ENCODE measurements at regions of chr6 and their contacts with region 1.

Region 1: DNA sequence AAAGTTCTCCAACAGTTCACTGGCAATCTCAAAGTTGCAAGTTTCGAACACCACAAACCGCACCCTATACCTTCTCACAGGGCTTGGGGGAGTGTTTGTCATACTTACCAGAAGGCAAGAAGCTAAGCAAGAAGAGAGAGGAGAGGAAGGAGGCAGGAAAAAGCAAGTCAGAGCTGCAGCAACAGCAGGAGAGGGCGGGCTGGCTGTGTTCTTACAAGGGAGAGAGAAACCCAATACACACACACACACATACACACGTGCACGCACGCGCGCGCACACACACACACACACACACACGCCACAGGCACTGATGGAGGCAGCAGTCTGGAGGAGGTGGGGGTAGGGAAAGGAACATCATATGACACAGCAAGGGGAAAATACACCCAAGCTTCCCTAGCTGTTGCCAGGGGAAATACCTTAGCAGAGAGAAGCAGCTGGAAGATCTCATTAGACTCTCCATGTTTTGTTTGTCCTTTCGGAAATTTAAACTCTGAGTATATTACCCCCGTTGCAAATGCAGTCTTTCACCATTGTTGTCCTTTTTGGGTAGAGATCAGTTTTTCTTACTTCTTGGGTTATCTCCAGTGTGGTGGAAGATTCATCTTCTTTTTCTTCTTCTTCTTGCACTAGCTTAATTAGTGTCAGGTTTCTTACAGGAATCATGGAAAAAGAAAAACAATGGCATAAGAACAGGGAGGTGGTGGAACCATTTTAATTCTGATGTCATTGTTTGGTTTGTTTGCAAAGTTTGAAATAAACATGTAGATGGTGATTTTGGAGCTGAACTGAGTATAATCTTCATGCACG is at the start of gene TXLNB:
- DNase-seq: peak; percentile 32 to 94 (median 87)
- ATAC-seq: peak; percentile 92
- H3K4me3 ChIP-seq: peak within 1 kb of the TSS; percentile 42
- H3K4me3 Mint-ChIP-seq: peak within 1 kb of the TSS; percentile 80 to 92 (median 90)
- H3K27ac ChIP-seq: peak within 1 kb of the TSS; percentile 75
- H3K27ac Mint-ChIP-seq: peak within 1 kb of the TSS; percentile 93 to 99 (median 98)
- H3K4me1 ChIP-seq: peaks cover 33 to 39% of the 10 kb centered on the region in 2 donors
- H3K4me1 Mint-ChIP-seq: peaks cover 36 to 87% (median 81%) of the 10 kb centered on the region in 7 donors
- H3K27me3 ChIP-seq: no peaks in the 10 kb centered on the region
- H3K27me3 Mint-ChIP-seq: no peaks in the 10 kb centered on the region
- total RNA-seq, gene TXLNB: 0.29 to 1.1 (median 0.66) TPM

Region 2: GRCh38 chr6:137849181-137849980 is 1442.6 kb before region 1 on chr6:
- CTCF ChIA-PET with region 1: no interaction called
- POLR2A ChIA-PET with region 1: no interaction called
- intact Hi-C with region 1: no loop called
- DNase-seq: no peak
- ATAC-seq: no peak
- H3K4me3 ChIP-seq: no peak overlapping the region
- H3K4me3 Mint-ChIP-seq: no peak overlapping the region
- H3K27ac ChIP-seq: no peak overlapping the region
- H3K27ac Mint-ChIP-seq: no peak overlapping the region
- H3K4me1 ChIP-seq: no peaks in the 10 kb centered on the region
- H3K4me1 Mint-ChIP-seq: peaks cover 0 to 17% (median 0%) of the 10 kb centered on the region in 7 donors
- H3K27me3 ChIP-seq: no peaks in the 10 kb centered on the region
- H3K27me3 Mint-ChIP-seq: no peaks in the 10 kb centered on the region

Region 3: DNA sequence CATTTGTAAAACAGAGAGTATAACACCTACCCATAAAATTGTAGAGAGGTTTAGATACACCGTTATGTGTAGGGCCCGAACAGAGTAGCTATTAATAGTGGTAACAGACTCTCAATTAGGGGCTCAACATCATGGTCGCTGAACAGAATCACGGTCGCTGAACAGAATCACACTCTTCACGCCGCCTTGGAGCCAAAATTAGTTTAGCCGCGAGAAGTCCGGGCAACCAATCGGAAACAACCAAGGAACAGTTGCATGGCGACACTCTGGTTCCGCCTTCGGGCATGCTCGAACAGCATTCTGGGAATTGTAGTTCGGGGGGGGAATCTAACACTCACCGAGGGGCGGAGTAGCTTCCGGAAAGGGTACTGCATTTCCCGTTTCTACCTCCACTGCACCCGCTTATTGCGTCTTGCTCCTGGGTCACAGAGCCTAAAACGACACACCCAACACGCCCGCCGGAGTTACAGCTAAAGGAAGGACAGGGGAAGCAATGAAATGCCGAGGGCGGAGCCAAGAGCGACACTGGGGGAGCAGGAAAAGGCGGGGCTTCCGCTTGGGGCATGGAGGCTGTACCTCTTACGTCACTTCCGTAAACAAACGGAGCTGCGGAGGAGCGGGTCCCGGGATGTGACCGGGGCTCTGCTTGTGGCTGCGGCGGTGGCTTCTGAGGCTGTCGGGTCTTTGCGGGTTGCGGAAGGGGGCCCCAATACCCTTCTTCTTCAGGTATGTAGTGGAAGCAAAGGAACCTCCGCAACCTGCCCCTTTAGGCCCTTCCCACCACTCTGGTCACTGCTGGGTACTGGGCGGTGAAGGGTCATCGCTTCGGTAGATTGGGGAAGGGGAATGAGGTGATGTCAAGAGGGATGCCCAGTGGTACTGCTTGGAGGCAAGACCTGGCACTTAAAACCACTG is 518.6 kb before region 1 on chr6 and contains the start of gene CCDC28A:
- CTCF ChIA-PET with region 1: no interaction called
- POLR2A ChIA-PET with region 1: no interaction called
- intact Hi-C with region 1: loop called (anchors 1 to 2 kb)
- DNase-seq: peak; percentile 86 to 98 (median 97)
- ATAC-seq: peak; percentile 93
- H3K4me3 ChIP-seq: peak within 1 kb of the TSS; percentile 94
- H3K4me3 Mint-ChIP-seq: peak within 1 kb of the TSS; percentile 91 to 100 (median 99)
- H3K27ac ChIP-seq: peak within 1 kb of the TSS; percentile 87
- H3K27ac Mint-ChIP-seq: peak within 1 kb of the TSS; percentile 96 to 100 (median 100)
- H3K4me1 ChIP-seq: peaks cover 6 to 10% of the 10 kb centered on the region in 2 donors
- H3K4me1 Mint-ChIP-seq: peaks cover 4 to 39% (median 36%) of the 10 kb centered on the region in 7 donors
- H3K27me3 ChIP-seq: no peaks in the 10 kb centered on the region
- H3K27me3 Mint-ChIP-seq: no peaks in the 10 kb centered on the region
- total RNA-seq, gene CCDC28A: 19.9 to 34.2 (median 25.6) TPM

Region 4: GRCh38 chr6:139028658-139029469 is 263.2 kb before region 1 on chr6 and contains the start of gene ABRACL:
- CTCF ChIA-PET with region 1: no interaction called
- POLR2A ChIA-PET with region 1: interaction called, 4 read pairs
- intact Hi-C with region 1: loop called (anchors 1 to 2 kb)
- DNase-seq: peak; percentile 44 to 87 (median 81)
- ATAC-seq: peak; percentile 88
- H3K4me3 ChIP-seq: peak within 1 kb of the TSS; percentile 72
- H3K4me3 Mint-ChIP-seq: peak within 1 kb of the TSS in 6 of 10 donors; percentile 88 to 98 (median 94)
- H3K27ac ChIP-seq: peak within 1 kb of the TSS; percentile 88
- H3K27ac Mint-ChIP-seq: peak within 1 kb of the TSS in 8 of 9 donors; percentile 58 to 97 (median 94)
- H3K4me1 ChIP-seq: peaks cover 3 to 18% of the 10 kb centered on the region in 2 donors
- H3K4me1 Mint-ChIP-seq: peaks cover 13 to 35% (median 24%) of the 10 kb centered on the region in 7 donors
- H3K27me3 ChIP-seq: no peaks in the 10 kb centered on the region
- H3K27me3 Mint-ChIP-seq: no peaks in the 10 kb centered on the region
- total RNA-seq, gene ABRACL: 39.5 to 137 (median 107) TPM

Region 5: DNA sequence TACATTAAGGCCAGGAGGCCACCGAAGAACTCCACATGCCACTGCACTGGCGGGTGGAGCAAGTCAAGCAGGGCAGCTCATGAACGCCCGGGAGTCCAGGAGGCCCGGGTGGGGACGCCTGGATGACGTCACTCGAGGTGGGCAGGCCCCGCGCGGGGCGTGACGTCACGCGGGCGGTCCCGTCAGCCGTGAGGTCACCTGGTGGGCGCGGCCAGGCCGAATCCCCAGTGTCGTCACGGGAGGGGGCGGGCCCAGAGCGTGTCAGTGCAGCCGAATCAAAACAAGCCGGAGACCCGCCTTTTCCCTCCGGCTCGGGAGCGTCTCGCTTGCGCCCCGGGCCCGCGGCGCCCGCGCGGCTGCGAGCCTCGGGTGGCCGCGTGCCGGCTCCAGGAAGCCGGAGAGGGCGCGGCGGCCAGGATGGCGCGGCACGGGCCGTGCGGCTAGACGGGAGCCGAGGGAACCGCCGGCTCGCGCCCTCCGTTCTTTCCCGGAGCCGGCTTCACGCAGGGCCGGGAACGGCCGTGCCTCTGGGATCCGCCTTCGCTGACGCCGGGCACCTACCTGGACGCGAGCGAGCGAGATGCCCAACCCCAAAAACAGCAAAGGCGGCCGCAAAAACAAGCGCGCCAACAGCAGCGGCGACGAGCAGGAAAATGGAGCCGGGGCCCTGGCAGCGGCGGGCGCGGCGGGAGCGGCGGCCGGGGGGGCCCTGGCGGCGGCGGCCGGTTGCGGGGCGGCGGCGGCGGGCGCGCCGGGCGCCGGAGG is 157.0 kb before region 1 on chr6 and contains the start of gene HECA:
- CTCF ChIA-PET with region 1: no interaction called
- POLR2A ChIA-PET with region 1: interaction called, 9 read pairs
- intact Hi-C with region 1: loop called (anchors 1 kb)
- DNase-seq: peak; percentile 99 to 100 (median 99)
- ATAC-seq: peak; percentile 91
- H3K4me3 ChIP-seq: peak within 1 kb of the TSS; percentile 93
- H3K4me3 Mint-ChIP-seq: peak within 1 kb of the TSS; percentile 84 to 99 (median 93)
- H3K27ac ChIP-seq: peak within 1 kb of the TSS; percentile 100
- H3K27ac Mint-ChIP-seq: peak within 1 kb of the TSS; percentile 95 to 100 (median 99)
- H3K4me1 ChIP-seq: peaks cover 21 to 43% of the 10 kb centered on the region in 2 donors
- H3K4me1 Mint-ChIP-seq: peaks cover 51 to 77% (median 66%) of the 10 kb centered on the region in 7 donors
- H3K27me3 ChIP-seq: no peaks in the 10 kb centered on the region
- H3K27me3 Mint-ChIP-seq: peaks cover 0 to 2% (median 0%) of the 10 kb centered on the region in 5 donors
- total RNA-seq, gene HECA: 54.1 to 145 (median 130) TPM

Region 6: DNA sequence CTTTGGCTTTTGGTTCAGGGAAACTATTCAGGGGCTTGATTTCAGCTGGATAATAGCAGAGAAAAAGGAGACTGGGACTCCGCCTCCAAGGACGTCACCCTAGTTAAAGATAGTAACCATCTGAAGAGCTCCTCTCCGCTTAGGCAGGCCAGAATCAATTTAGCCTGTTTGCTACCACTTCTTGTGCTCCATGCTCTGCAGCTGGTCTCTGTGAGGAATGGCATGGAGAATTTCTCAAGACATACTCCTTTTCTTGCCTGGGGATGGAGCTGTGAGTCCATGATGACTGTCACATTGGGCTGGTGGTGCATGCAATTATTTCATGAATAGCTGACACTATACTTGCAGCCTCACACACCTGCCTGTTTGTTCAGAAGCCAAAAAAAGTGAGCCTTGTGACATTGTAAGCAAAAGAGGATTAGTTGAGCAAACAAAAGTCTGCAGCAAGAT is 61.6 kb before region 1 on chr6:
- CTCF ChIA-PET with region 1: interaction called, 6 read pairs
- POLR2A ChIA-PET with region 1: interaction called, 3 read pairs
- intact Hi-C with region 1: loop called in 1 of 2 experiments (anchors 5 kb)
- DNase-seq: peak in 4 of 9 donors; percentile 8 to 28 (median 20)
- ATAC-seq: no peak
- H3K4me3 ChIP-seq: no peak overlapping the region
- H3K4me3 Mint-ChIP-seq: no peak overlapping the region
- H3K27ac ChIP-seq: no peak overlapping the region
- H3K27ac Mint-ChIP-seq: peak overlapping the region in 5 of 9 donors; percentile 2 to 44 (median 23)
- H3K4me1 ChIP-seq: no peaks in the 10 kb centered on the region
- H3K4me1 Mint-ChIP-seq: peaks cover 4 to 15% (median 10%) of the 10 kb centered on the region in 7 donors
- H3K27me3 ChIP-seq: no peaks in the 10 kb centered on the region
- H3K27me3 Mint-ChIP-seq: no peaks in the 10 kb centered on the region

Region 7: GRCh38 chr6:139262519-139263300 is 29.3 kb before region 1 on chr6:
- CTCF ChIA-PET with region 1: interaction called, 6 read pairs
- POLR2A ChIA-PET with region 1: interaction called, 10 read pairs
- intact Hi-C with region 1: loop called (anchors 1 kb)
- DNase-seq: peak in 8 of 9 donors; percentile 24 to 56 (median 38)
- ATAC-seq: peak; percentile 85
- H3K4me3 ChIP-seq: peak overlapping the region; percentile 34
- H3K4me3 Mint-ChIP-seq: peak overlapping the region; percentile 45 to 85 (median 77)
- H3K27ac ChIP-seq: peak overlapping the region; percentile 14
- H3K27ac Mint-ChIP-seq: peak overlapping the region; percentile 62 to 89 (median 83)
- H3K4me1 ChIP-seq: peaks cover 7 to 10% of the 10 kb centered on the region in 2 donors
- H3K4me1 Mint-ChIP-seq: peaks cover 17 to 33% (median 25%) of the 10 kb centered on the region in 7 donors
- H3K27me3 ChIP-seq: no peaks in the 10 kb centered on the region
- H3K27me3 Mint-ChIP-seq: no peaks in the 10 kb centered on the region

Region 8: GRCh38 chr6:139323511-139324300 is 31.7 kb after region 1 on chr6:
- CTCF ChIA-PET with region 1: interaction called, 16 read pairs
- POLR2A ChIA-PET with region 1: interaction called, 40 read pairs
- intact Hi-C with region 1: loop called (anchors 1 kb)
- DNase-seq: peak; percentile 54 to 90 (median 86)
- ATAC-seq: peak; percentile 90
- H3K4me3 ChIP-seq: peak overlapping the region; percentile 64
- H3K4me3 Mint-ChIP-seq: peak overlapping the region; percentile 80 to 96 (median 90)
- H3K27ac ChIP-seq: peak overlapping the region; percentile 83
- H3K27ac Mint-ChIP-seq: peak overlapping the region; percentile 96 to 100 (median 99)
- H3K4me1 ChIP-seq: peaks cover 12 to 19% of the 10 kb centered on the region in 2 donors
- H3K4me1 Mint-ChIP-seq: peaks cover 19 to 44% (median 32%) of the 10 kb centered on the region in 7 donors
- H3K27me3 ChIP-seq: no peaks in the 10 kb centered on the region
- H3K27me3 Mint-ChIP-seq: no peaks in the 10 kb centered on the region

Measured in naive thymus-derived CD4-positive, alpha-beta T cell (primary cell).